Mammary epithelial cell (primary cell): ENCODE measurements at regions of chr1 and their contacts with region 1.

Region 1: GRCh38 chr1:37741130-37741529 is 23.8 kb downstream of the EPHA10 start:
- DNase-seq: peak; percentile 94
- H3K4me3 ChIP-seq: no peak overlapping the region
- H3K27ac ChIP-seq: no peak overlapping the region
- H3K4me1 ChIP-seq: peaks cover 11% of the 10 kb centered on the region
- H3K27me3 ChIP-seq: no peaks in the 10 kb centered on the region
- CTCF ChIP-seq: no peak

Region 2: GRCh38 chr1:37723390-37724078 is 17.6 kb before region 1 on chr1:
- CTCF ChIA-PET with region 1: no interaction called
- dilution Hi-C with region 1: no loop called
- in situ Hi-C with region 1: no loop called
- intact Hi-C with region 1: loop called (anchors 2 kb)
- DNase-seq: no peak
- H3K4me3 ChIP-seq: no peak overlapping the region
- H3K27ac ChIP-seq: no peak overlapping the region
- H3K4me1 ChIP-seq: peaks cover 3% of the 10 kb centered on the region
- H3K27me3 ChIP-seq: peaks cover 2% of the 10 kb centered on the region
- CTCF ChIP-seq: no peak

Region 3: GRCh38 chr1:37752583-37753471 is 11.7 kb after region 1 on chr1:
- CTCF ChIA-PET with region 1: no interaction called
- dilution Hi-C with region 1: no loop called
- in situ Hi-C with region 1: no loop called
- intact Hi-C with region 1: loop called (anchors 1 kb)
- DNase-seq: no peak
- H3K4me3 ChIP-seq: peak overlapping the region in 1 of 3 experiments; percentile 46
- H3K27ac ChIP-seq: no peak overlapping the region
- H3K4me1 ChIP-seq: no peaks in the 10 kb centered on the region
- H3K27me3 ChIP-seq: peaks cover 20% of the 10 kb centered on the region
- CTCF ChIP-seq: no peak

Region 4: DNA sequence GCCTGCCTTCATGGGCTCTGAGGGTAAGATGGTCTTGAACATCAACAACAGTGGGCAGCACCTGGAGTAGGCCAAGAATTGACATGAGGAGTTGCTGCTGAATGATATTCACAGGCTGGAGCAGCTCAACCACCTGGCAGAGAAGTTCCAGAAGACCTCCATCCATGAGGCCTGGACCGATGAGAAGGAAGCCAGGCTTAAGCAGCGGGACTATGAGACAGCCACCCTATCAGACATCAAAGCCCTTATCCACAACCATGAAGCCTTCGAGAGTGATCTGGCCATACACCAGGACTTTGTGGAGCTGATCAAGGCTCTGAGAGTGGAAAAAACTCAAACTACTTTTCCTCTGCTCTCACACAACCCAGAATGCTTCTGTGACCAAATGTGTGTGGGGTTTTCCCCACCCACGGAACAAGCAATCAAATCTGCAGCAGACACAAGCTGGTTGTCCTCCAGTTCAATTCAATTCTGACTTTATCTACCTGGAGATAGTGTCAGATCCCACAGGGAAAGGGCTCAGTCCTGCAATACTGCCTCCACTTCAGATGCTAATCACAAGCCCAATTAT is 35.9 kb after region 1 on chr1:
- CTCF ChIA-PET with region 1: no interaction called
- dilution Hi-C with region 1: no loop called
- in situ Hi-C with region 1: no loop called
- intact Hi-C with region 1: no loop called
- DNase-seq: no peak
- H3K4me3 ChIP-seq: no peak overlapping the region
- H3K27ac ChIP-seq: no peak overlapping the region
- H3K4me1 ChIP-seq: no peaks in the 10 kb centered on the region
- H3K27me3 ChIP-seq: no peaks in the 10 kb centered on the region
- CTCF ChIP-seq: no peak

Region 5: DNA sequence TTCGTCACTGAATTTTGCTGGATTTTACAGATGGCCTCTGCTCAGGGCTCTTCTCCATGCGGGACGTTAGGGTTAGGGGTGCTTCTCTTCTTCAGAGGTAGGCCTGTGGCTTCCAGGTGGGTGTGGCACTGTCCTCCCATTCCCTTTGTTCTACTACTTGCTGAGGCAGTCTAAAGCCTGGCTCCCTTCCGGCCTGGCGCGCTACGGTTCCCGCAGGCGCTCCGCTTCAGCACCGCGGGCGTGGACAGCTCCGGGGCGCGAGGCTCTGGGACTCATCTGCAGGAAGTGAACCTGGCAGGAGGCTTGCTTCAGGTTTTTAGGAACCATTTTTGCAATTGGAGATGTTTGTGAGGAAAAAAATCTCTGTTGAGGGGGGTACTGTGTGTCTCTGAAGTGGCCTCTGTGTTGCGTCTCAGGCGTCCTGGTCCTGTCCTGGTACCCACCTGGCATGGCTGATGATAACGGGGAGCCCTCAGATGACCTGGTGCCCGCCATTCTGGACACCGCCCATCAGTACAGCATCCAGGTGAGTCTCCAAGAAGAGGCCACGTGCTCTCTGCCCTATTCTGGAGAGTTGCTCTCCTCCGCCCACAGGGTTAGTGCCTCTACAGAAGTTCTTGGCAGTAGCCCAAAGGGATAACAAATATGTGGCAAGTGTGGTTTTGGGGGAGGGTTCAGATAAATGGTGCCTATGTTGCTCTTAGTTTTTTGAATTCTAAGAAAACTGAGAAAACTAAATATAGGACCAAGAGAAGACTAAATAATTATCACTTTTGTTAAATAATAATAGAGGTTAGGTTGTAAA is 54.4 kb after region 1 on chr1:
- CTCF ChIA-PET with region 1: no interaction called
- dilution Hi-C with region 1: no loop called
- in situ Hi-C with region 1: no loop called
- intact Hi-C with region 1: no loop called
- DNase-seq: peak; percentile 52
- H3K4me3 ChIP-seq: no peak overlapping the region
- H3K27ac ChIP-seq: no peak overlapping the region
- H3K4me1 ChIP-seq: peaks cover 9% of the 10 kb centered on the region
- H3K27me3 ChIP-seq: no peaks in the 10 kb centered on the region
- CTCF ChIP-seq: no peak

Region 6: DNA sequence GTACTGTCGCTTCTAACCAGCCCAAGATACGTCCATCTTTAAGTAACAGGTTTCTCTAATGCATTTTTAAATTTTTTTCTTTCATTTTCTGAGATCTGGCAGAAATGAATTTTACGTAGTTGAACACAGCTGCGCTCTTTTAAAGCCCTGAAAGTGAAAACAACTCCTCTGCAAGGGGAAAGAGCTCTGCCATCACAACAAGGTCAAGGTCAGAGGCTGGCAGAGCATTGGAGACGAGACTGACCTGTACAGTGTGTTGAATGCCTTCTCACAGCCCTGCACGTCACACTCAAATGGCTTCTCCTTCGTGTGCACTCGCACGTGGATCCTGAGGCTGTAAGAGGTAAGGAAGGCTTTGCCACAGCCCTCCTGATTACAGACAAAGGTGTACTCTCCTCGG is 98.5 kb after region 1 on chr1:
- CTCF ChIA-PET with region 1: no interaction called
- dilution Hi-C with region 1: loop called (anchors 5 kb)
- in situ Hi-C with region 1: no loop called
- intact Hi-C with region 1: no loop called
- DNase-seq: no peak
- H3K4me3 ChIP-seq: no peak overlapping the region
- H3K27ac ChIP-seq: no peak overlapping the region
- H3K4me1 ChIP-seq: no peaks in the 10 kb centered on the region
- H3K27me3 ChIP-seq: no peaks in the 10 kb centered on the region
- CTCF ChIP-seq: no peak